CD14-positive monocyte (primary cell): ENCODE measurements at regions of chr7 and their contacts with region 1.

Region 1: DNA sequence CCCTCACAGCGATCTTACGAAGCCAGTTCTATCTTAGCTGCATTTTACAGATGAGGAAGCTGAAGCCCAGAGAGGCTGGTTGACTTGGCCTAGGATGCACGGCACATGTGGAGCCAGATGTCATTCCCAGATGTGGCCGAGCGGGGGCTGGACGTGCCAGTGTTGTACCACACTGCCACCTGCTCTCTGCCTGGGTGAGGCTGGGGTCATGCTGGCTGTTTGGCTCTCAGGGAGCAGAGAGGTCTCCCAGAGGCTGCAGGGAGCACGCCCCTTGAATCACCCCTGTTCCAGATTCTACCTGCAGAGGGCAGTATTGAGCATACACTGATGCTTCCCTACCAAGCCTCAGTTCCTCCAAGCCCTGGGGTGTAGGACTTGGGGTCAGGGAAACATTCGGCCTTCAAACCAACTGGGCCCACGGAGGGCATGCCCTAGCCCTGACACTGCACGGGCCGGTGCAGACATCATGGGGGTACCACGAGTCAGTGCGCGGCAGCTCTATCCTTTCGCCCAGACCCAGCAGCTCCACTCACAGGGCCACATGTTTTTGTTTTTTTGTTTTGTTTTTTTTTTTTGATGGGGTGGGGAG is 3.8 kb upstream of the GTF2IRD1 start:
- DNase-seq: peak; percentile 52 to 66 (median 65)
- H3K4me3 ChIP-seq: no peak overlapping the region
- H3K4me3 Mint-ChIP-seq: no peak overlapping the region
- H3K27ac ChIP-seq: no peak overlapping the region
- H3K27ac Mint-ChIP-seq: peak overlapping the region in 1 of 7 donors; percentile 71
- H3K4me1 ChIP-seq: peaks cover 10 to 13% of the 10 kb centered on the region in 2 donors
- H3K4me1 Mint-ChIP-seq: peaks cover 13% of the 10 kb centered on the region
- H3K27me3 ChIP-seq: peaks cover 4 to 30% of the 10 kb centered on the region in 2 donors
- H3K27me3 Mint-ChIP-seq: peaks cover 23 to 39% (median 29%) of the 10 kb centered on the region in 3 donors
- CTCF ChIP-seq: peak; percentile 88

Region 2: GRCh38 chr7:74489997-74490945 is 40.4 kb after region 1 on chr7:
- intact Hi-C with region 1: loop called in 1 of 2 experiments (anchors 5 kb)
- DNase-seq: no peak
- H3K4me3 ChIP-seq: no peak overlapping the region
- H3K4me3 Mint-ChIP-seq: no peak overlapping the region
- H3K27ac ChIP-seq: no peak overlapping the region
- H3K27ac Mint-ChIP-seq: no peak overlapping the region
- H3K4me1 ChIP-seq: no peaks in the 10 kb centered on the region
- H3K4me1 Mint-ChIP-seq: no peaks in the 10 kb centered on the region
- H3K27me3 ChIP-seq: no peaks in the 10 kb centered on the region
- H3K27me3 Mint-ChIP-seq: peaks cover 2 to 5% (median 3%) of the 10 kb centered on the region in 3 donors
- CTCF ChIP-seq: no peak

Region 3: DNA sequence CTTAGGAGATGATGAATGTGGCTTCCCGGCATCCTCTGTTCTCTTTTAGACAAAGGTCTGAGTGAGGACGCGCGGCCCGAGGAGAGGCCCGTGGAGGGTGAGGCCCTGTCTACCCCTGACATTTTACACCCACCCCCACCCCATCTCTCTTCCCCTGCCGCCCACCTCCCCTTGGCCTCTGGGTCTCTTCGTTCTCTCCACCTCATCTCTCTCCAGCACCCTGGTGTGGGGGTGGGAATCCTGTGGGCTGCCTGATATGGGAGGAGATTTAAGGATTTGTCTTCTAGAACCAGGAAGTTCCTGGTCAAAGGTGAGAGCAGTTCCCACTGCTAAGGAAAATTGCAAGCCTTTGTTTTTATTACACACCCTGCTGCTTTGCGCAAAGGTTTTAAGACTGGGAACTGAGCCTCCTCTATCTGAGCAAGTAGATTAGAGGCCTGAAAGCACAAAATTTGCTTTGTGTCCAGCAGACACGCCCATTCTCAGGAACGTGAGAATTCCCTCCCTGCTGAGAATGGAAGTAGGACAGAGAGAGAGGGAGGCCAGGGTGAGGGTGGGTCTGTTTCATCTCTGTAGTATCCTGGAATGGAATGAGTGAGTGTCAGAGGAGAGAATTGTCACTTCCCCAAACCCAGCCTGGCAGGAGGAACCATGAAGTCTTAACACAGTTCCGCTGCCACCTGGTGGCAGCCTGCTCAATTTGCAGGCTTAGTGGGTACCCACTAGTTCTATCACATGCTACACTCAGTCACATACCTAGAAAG is 95.0 kb after region 1 on chr7:
- intact Hi-C with region 1: loop called (anchors 5 kb)
- DNase-seq: peak; percentile 32 to 62 (median 52)
- H3K4me3 ChIP-seq: no peak overlapping the region
- H3K4me3 Mint-ChIP-seq: no peak overlapping the region
- H3K27ac ChIP-seq: no peak overlapping the region
- H3K27ac Mint-ChIP-seq: peak overlapping the region in 1 of 7 donors; percentile 13
- H3K4me1 ChIP-seq: no peaks in the 10 kb centered on the region
- H3K4me1 Mint-ChIP-seq: no peaks in the 10 kb centered on the region
- H3K27me3 ChIP-seq: no peaks in the 10 kb centered on the region
- H3K27me3 Mint-ChIP-seq: peaks cover 3 to 7% (median 5%) of the 10 kb centered on the region in 3 donors
- CTCF ChIP-seq: peak; percentile 70

Region 4: DNA sequence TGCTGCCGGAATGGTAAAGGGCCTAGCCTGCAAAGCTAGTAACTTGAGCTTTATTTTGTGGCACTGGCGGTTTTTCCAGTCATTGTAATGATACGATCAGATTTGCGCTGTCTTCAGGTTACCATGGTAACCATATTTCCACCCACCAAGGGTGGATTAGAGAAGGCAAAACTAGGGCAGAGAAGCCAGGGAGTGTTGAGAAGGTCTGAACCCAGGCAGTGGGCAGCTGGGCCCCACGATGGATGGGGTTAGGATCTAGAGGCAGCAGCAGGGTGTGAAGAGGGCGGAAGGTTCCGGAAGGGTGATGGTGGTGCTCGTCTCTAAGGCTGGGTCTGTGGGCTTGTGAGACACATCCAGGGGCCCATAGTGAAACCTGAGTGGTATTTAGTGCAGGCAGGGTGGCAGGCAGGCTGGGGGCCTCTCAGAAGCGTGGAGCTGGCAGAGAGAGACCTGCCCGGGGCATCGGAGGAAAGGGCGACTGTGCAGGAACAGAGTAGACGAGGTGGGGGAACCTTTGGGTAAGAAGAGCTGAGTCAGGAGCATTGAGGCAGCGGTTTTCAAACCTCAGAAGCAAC is 119.7 kb after region 1 on chr7:
- intact Hi-C with region 1: loop called in 1 of 2 experiments (anchors 5 kb)
- DNase-seq: no peak
- H3K4me3 ChIP-seq: no peak overlapping the region
- H3K4me3 Mint-ChIP-seq: no peak overlapping the region
- H3K27ac ChIP-seq: no peak overlapping the region
- H3K27ac Mint-ChIP-seq: peak overlapping the region in 1 of 7 donors; percentile 17
- H3K4me1 ChIP-seq: no peaks in the 10 kb centered on the region
- H3K4me1 Mint-ChIP-seq: no peaks in the 10 kb centered on the region
- H3K27me3 ChIP-seq: no peaks in the 10 kb centered on the region
- H3K27me3 Mint-ChIP-seq: peaks cover 0 to 2% (median 0%) of the 10 kb centered on the region in 3 donors
- CTCF ChIP-seq: no peak